SK-N-SH (cell line): ENCODE measurements at regions of chr11 and their contacts with region 1.

Region 1: GRCh38 chr11:12914400-12914912 is 94.7 kb upstream of the RASSF10 start:
- DNase-seq: peak; percentile 82
- H3K4me3 ChIP-seq: peak overlapping the region in 1 of 2 experiments; percentile 41; a peak in 1 of 4 replicates
- H3K27ac ChIP-seq: peak overlapping the region in 1 of 2 experiments; percentile 68; a peak in 2 of 4 replicates
- H3K4me1 ChIP-seq: peaks cover 0 to 14% of the 10 kb centered on the region in 2 experiments; a peak in 1 of 4 replicates
- H3K27me3 ChIP-seq: no peaks in the 10 kb centered on the region
- CTCF ChIP-seq: peak; percentile 64
- EP300 ChIP-seq: no peak
- RAD21 ChIP-seq: peak; percentile 49

Region 2: GRCh38 chr11:12900496-12900895 is 14.0 kb before region 1 on chr11:
- CTCF ChIA-PET with region 1: interaction called, 19 read pairs
- POLR2A ChIA-PET with region 1: no interaction called
- DNase-seq: no peak
- H3K4me3 ChIP-seq: no peak overlapping the region
- H3K27ac ChIP-seq: peak overlapping the region; percentile 54 to 65; a peak in 3 of 4 replicates
- H3K4me1 ChIP-seq: peaks cover 8 to 12% of the 10 kb centered on the region in 2 experiments; a peak in 3 of 4 replicates
- H3K27me3 ChIP-seq: no peaks in the 10 kb centered on the region
- CTCF ChIP-seq: no peak
- EP300 ChIP-seq: peak in 1 of 2 experiments; percentile 42; a peak in 1 of 4 replicates
- RAD21 ChIP-seq: no peak

Region 3: GRCh38 chr11:12930850-12931249 is 16.4 kb after region 1 on chr11:
- CTCF ChIA-PET with region 1: interaction called, 13 read pairs
- POLR2A ChIA-PET with region 1: no interaction called
- DNase-seq: no peak
- H3K4me3 ChIP-seq: no peak overlapping the region
- H3K27ac ChIP-seq: no peak overlapping the region
- H3K4me1 ChIP-seq: no peaks in the 10 kb centered on the region; a peak in 1 of 4 replicates
- H3K27me3 ChIP-seq: no peaks in the 10 kb centered on the region
- CTCF ChIP-seq: no peak
- EP300 ChIP-seq: no peak
- RAD21 ChIP-seq: no peak

Region 4: GRCh38 chr11:13016415-13016814 is 102.0 kb after region 1 on chr11:
- CTCF ChIA-PET with region 1: no interaction called
- POLR2A ChIA-PET with region 1: no interaction called
- DNase-seq: no peak
- H3K4me3 ChIP-seq: no peak overlapping the region
- H3K27ac ChIP-seq: no peak overlapping the region
- H3K4me1 ChIP-seq: no peaks in the 10 kb centered on the region
- H3K27me3 ChIP-seq: peaks cover 5% of the 10 kb centered on the region; the same call in 1 of the 2 replicates
- CTCF ChIP-seq: peak; percentile 23; the same call in 1 of the 2 replicates
- EP300 ChIP-seq: no peak
- RAD21 ChIP-seq: peak; percentile 45